Lower leg skin (tissue), 4 donors: ENCODE measurements at regions of chr9 and their contacts with region 1.

Region 1: GRCh38 chr9:124771021-124771866 is at the start of gene NR6A1:
- DNase-seq: peak; percentile 96 to 99
- H3K4me3 ChIP-seq: peak within 1 kb of the TSS; percentile 80
- CTCF ChIP-seq: no peak
- POLR2A ChIP-seq: no peak
- total RNA-seq, gene NR6A1: 3.0 to 4.9 (median 3.8) TPM

Region 2: GRCh38 chr9:124852829-124853531 is 81.7 kb after region 1 on chr9 and contains the start of gene WDR38:
- intact Hi-C with region 1: loop called (anchors 2 kb)
- DNase-seq: peak in 1 of 2 donors; percentile 94
- H3K4me3 ChIP-seq: no peak within 1 kb of the TSS
- CTCF ChIP-seq: peak in 1 of 3 donors; percentile 90
- POLR2A ChIP-seq: no peak
- total RNA-seq, gene WDR38: not detected

Region 3: GRCh38 chr9:125374443-125375309 is 603.4 kb after region 1 on chr9:
- intact Hi-C with region 1: loop called (anchors 10 kb)
- DNase-seq: peak in 1 of 2 donors; percentile 91
- H3K4me3 ChIP-seq: no peak overlapping the region
- CTCF ChIP-seq: peak in 1 of 3 donors; percentile 30
- POLR2A ChIP-seq: no peak